Gastrocnemius medialis (tissue), 4 donors: ENCODE measurements at regions of chr7 and their contacts with region 1.

Region 1: GRCh38 chr7:518630-519483 is 789 bp downstream of the PDGFA start:
- DNase-seq: peak; percentile 76 to 80
- ATAC-seq: peak; percentile 45 to 49
- H3K4me3 ChIP-seq: peak overlapping the region; percentile 53 to 94 (median 83)
- H3K27ac ChIP-seq: peak overlapping the region; percentile 82 to 99 (median 95)
- H3K4me1 ChIP-seq: peaks cover 25 to 40% of the 10 kb centered on the region in 2 donors
- H3K27me3 ChIP-seq: no peaks in the 10 kb centered on the region
- CTCF ChIP-seq: peak in 2 of 5 experiments; percentile 21 to 22
- POLR2A ChIP-seq: peak; percentile 70 to 76

Region 2: DNA sequence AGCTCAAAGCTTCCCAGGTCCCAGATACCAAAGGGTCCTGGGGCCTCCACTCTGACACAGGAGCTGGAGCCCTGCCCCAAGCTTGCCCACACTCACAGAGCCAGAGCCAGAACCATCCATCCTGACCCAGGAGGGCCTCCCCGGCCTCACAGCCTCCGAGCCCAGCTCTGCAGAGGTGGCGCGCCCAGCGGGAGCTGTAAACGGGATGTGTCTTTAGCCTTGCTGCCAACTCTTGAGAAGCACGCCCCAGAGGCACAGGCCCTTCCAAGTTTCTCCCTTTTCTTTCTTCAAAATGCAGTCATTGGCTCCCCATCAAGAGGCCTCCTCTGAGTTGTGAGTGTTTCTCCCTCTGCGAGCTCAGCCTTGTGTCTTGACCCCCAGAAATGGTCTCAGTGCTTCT is 74.3 kb before region 1 on chr7:
- in situ Hi-C with region 1: no loop called
- intact Hi-C with region 1: loop called (anchors 1 kb)
- DNase-seq: no peak
- ATAC-seq: no peak
- H3K4me3 ChIP-seq: no peak overlapping the region
- H3K27ac ChIP-seq: no peak overlapping the region
- H3K4me1 ChIP-seq: peaks cover 11 to 14% of the 10 kb centered on the region in 2 donors
- H3K27me3 ChIP-seq: no peaks in the 10 kb centered on the region
- CTCF ChIP-seq: no peak
- POLR2A ChIP-seq: no peak

Region 3: GRCh38 chr7:593324-594115 is 74.7 kb after region 1 on chr7:
- in situ Hi-C with region 1: no loop called
- intact Hi-C with region 1: loop called (anchors 2 kb)
- DNase-seq: no peak
- ATAC-seq: peak; percentile 57 to 68
- H3K4me3 ChIP-seq: peak overlapping the region in 2 of 4 donors; percentile 2
- H3K27ac ChIP-seq: peak overlapping the region; percentile 20 to 52 (median 40)
- H3K4me1 ChIP-seq: peaks cover 23 to 26% of the 10 kb centered on the region in 2 donors
- H3K27me3 ChIP-seq: no peaks in the 10 kb centered on the region
- CTCF ChIP-seq: no peak
- POLR2A ChIP-seq: no peak

Region 4: GRCh38 chr7:732094-732541 is 213.3 kb after region 1 on chr7:
- in situ Hi-C with region 1: no loop called
- intact Hi-C with region 1: loop called (anchors 5 kb)
- DNase-seq: peak; percentile 56 to 72
- ATAC-seq: peak; percentile 77 to 80
- H3K4me3 ChIP-seq: no peak overlapping the region
- H3K27ac ChIP-seq: peak overlapping the region; percentile 80 to 88 (median 82)
- H3K4me1 ChIP-seq: peaks cover 29 to 39% of the 10 kb centered on the region in 2 donors
- H3K27me3 ChIP-seq: no peaks in the 10 kb centered on the region
- CTCF ChIP-seq: peak in 3 of 5 experiments; percentile 47 to 49 (median 47)
- POLR2A ChIP-seq: no peak